ENCODE measurements at regions of chr6 and their contacts with region 1.

Region 1: GRCh38 chr6:89328976-89329375 is 13.9 kb upstream of the GABRR2 start:
- DNase-seq: no peak
- ATAC-seq: no peak
- H3K4me3 ChIP-seq: no peak overlapping the region
- H3K4me3 Mint-ChIP-seq: no peak overlapping the region
- H3K27ac ChIP-seq: no peak overlapping the region
- H3K27ac Mint-ChIP-seq: peak overlapping the region in 1 of 9 donors; percentile 1
- H3K4me1 ChIP-seq: no peaks in the 10 kb centered on the region
- H3K4me1 Mint-ChIP-seq: peaks cover 0 to 5% (median 0%) of the 10 kb centered on the region in 7 donors
- H3K27me3 ChIP-seq: no peaks in the 10 kb centered on the region
- H3K27me3 Mint-ChIP-seq: no peaks in the 10 kb centered on the region

Region 2: DNA sequence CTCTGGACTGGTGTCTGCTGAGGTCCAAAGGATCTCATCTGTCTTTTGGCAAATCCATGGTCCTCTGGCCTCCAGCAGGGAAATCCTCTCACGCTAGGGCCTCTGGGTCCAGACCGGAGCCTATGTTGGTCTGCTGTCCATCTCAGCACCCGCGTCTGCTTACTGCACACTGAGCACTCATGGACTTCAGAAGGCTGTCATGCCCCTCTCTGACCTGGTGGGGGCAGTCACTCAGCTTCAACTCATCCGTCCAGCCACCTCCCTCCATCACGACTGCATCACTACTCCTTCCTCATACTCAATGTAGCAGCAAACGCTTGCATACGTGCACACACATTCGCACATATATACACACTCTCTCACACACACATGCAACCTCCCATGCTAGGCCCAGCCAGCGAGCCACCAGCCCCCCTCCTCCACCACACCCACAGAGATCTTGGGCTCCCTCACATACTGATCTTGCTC is 47.2 kb before region 1 on chr6:
- CTCF ChIA-PET with region 1: no interaction called
- POLR2A ChIA-PET with region 1: no interaction called
- intact Hi-C with region 1: loop called in 1 of 2 experiments (anchors 5 kb)
- DNase-seq: peak in 2 of 9 donors; percentile 9 to 35
- ATAC-seq: peak; percentile 87
- H3K4me3 ChIP-seq: no peak overlapping the region
- H3K4me3 Mint-ChIP-seq: no peak overlapping the region
- H3K27ac ChIP-seq: no peak overlapping the region
- H3K27ac Mint-ChIP-seq: no peak overlapping the region
- H3K4me1 ChIP-seq: no peaks in the 10 kb centered on the region
- H3K4me1 Mint-ChIP-seq: peaks cover 0 to 7% (median 0%) of the 10 kb centered on the region in 7 donors
- H3K27me3 ChIP-seq: no peaks in the 10 kb centered on the region
- H3K27me3 Mint-ChIP-seq: peaks cover 0 to 9% (median 0%) of the 10 kb centered on the region in 5 donors

Region 3: GRCh38 chr6:89302936-89303335 is 26.0 kb before region 1 on chr6:
- CTCF ChIA-PET with region 1: no interaction called
- POLR2A ChIA-PET with region 1: no interaction called
- intact Hi-C with region 1: no loop called
- DNase-seq: no peak
- ATAC-seq: no peak
- H3K4me3 ChIP-seq: no peak overlapping the region
- H3K4me3 Mint-ChIP-seq: no peak overlapping the region
- H3K27ac ChIP-seq: no peak overlapping the region
- H3K27ac Mint-ChIP-seq: no peak overlapping the region
- H3K4me1 ChIP-seq: peaks cover 13 to 15% of the 10 kb centered on the region in 2 donors
- H3K4me1 Mint-ChIP-seq: peaks cover 9 to 17% (median 13%) of the 10 kb centered on the region in 7 donors
- H3K27me3 ChIP-seq: no peaks in the 10 kb centered on the region
- H3K27me3 Mint-ChIP-seq: no peaks in the 10 kb centered on the region

Measured in naive thymus-derived CD4-positive, alpha-beta T cell (primary cell).